GM12878 (cell line): ENCODE measurements at regions of chr17 and their contacts with region 1.

Region 1: GRCh38 chr17:164303-165235 is 16.9 kb downstream of the DOC2B start:
- DNase-seq: no peak
- ATAC-seq: peak; percentile 86
- H3K4me3 ChIP-seq: no peak overlapping the region
- H3K27ac ChIP-seq: no peak overlapping the region
- H3K4me1 ChIP-seq: peaks cover 5% of the 10 kb centered on the region; the same call in 1 of the 2 replicates
- H3K27me3 ChIP-seq: no peaks in the 10 kb centered on the region
- CTCF ChIP-seq: peak; percentile 48 to 63 (median 56)
- EP300 ChIP-seq: no peak
- POLR2A ChIP-seq: no peak
- RAD21 ChIP-seq: peak; percentile 59

Region 2: GRCh38 chr17:222172-222571 is 57.6 kb after region 1 on chr17:
- CTCF ChIA-PET with region 1: no interaction called
- POLR2A ChIA-PET with region 1: no interaction called
- RAD21 ChIA-PET with region 1: no interaction called
- SMC1A ChIA-PET with region 1: no interaction called
- in situ Hi-C with region 1: no loop called
- intact Hi-C with region 1: no loop called
- DNase-seq: no peak
- ATAC-seq: no peak
- H3K4me3 ChIP-seq: no peak overlapping the region
- H3K27ac ChIP-seq: no peak overlapping the region
- H3K4me1 ChIP-seq: no peaks in the 10 kb centered on the region
- H3K27me3 ChIP-seq: no peaks in the 10 kb centered on the region; a peak in 1 of 4 replicates
- CTCF ChIP-seq: no peak
- EP300 ChIP-seq: no peak
- POLR2A ChIP-seq: no peak
- RAD21 ChIP-seq: no peak

Region 3: GRCh38 chr17:233473-233941 is 68.9 kb after region 1 on chr17:
- CTCF ChIA-PET with region 1: no interaction called
- POLR2A ChIA-PET with region 1: no interaction called
- RAD21 ChIA-PET with region 1: no interaction called
- SMC1A ChIA-PET with region 1: no interaction called
- in situ Hi-C with region 1: no loop called
- intact Hi-C with region 1: no loop called
- DNase-seq: no peak
- ATAC-seq: peak; percentile 74
- H3K4me3 ChIP-seq: no peak overlapping the region
- H3K27ac ChIP-seq: no peak overlapping the region
- H3K4me1 ChIP-seq: peaks cover 12% of the 10 kb centered on the region
- H3K27me3 ChIP-seq: no peaks in the 10 kb centered on the region; a peak in 1 of 4 replicates
- CTCF ChIP-seq: 0 out of 6 replicates have a peak, but pooled peaks of 1 of the 3 experiments have one; percentile 14
- EP300 ChIP-seq: no peak
- POLR2A ChIP-seq: no peak
- RAD21 ChIP-seq: no peak

Region 4: GRCh38 chr17:309361-309888 is 144.9 kb after region 1 on chr17:
- CTCF ChIA-PET with region 1: interaction called, 9 read pairs
- POLR2A ChIA-PET with region 1: no interaction called
- RAD21 ChIA-PET with region 1: no interaction called
- SMC1A ChIA-PET with region 1: interaction called, 3 read pairs
- in situ Hi-C with region 1: loop called (anchors 5 kb)
- intact Hi-C with region 1: loop called (anchors 5 kb)
- DNase-seq: no peak
- ATAC-seq: peak; percentile 93
- H3K4me3 ChIP-seq: no peak overlapping the region
- H3K27ac ChIP-seq: no peak overlapping the region
- H3K4me1 ChIP-seq: no peaks in the 10 kb centered on the region
- H3K27me3 ChIP-seq: no peaks in the 10 kb centered on the region
- CTCF ChIP-seq: peak; percentile 35 to 73 (median 61)
- EP300 ChIP-seq: no peak
- POLR2A ChIP-seq: no peak
- RAD21 ChIP-seq: no peak

Region 5: GRCh38 chr17:333626-334396 is 169.2 kb after region 1 on chr17:
- CTCF ChIA-PET with region 1: no interaction called
- POLR2A ChIA-PET with region 1: no interaction called
- RAD21 ChIA-PET with region 1: no interaction called
- SMC1A ChIA-PET with region 1: no interaction called
- in situ Hi-C with region 1: no loop called
- intact Hi-C with region 1: no loop called
- DNase-seq: no peak
- ATAC-seq: no peak
- H3K4me3 ChIP-seq: no peak overlapping the region
- H3K27ac ChIP-seq: no peak overlapping the region
- H3K4me1 ChIP-seq: no peaks in the 10 kb centered on the region; the same call in 1 of the 2 replicates
- H3K27me3 ChIP-seq: no peaks in the 10 kb centered on the region
- CTCF ChIP-seq: no peak
- EP300 ChIP-seq: no peak
- POLR2A ChIP-seq: no peak
- RAD21 ChIP-seq: no peak

Region 6: DNA sequence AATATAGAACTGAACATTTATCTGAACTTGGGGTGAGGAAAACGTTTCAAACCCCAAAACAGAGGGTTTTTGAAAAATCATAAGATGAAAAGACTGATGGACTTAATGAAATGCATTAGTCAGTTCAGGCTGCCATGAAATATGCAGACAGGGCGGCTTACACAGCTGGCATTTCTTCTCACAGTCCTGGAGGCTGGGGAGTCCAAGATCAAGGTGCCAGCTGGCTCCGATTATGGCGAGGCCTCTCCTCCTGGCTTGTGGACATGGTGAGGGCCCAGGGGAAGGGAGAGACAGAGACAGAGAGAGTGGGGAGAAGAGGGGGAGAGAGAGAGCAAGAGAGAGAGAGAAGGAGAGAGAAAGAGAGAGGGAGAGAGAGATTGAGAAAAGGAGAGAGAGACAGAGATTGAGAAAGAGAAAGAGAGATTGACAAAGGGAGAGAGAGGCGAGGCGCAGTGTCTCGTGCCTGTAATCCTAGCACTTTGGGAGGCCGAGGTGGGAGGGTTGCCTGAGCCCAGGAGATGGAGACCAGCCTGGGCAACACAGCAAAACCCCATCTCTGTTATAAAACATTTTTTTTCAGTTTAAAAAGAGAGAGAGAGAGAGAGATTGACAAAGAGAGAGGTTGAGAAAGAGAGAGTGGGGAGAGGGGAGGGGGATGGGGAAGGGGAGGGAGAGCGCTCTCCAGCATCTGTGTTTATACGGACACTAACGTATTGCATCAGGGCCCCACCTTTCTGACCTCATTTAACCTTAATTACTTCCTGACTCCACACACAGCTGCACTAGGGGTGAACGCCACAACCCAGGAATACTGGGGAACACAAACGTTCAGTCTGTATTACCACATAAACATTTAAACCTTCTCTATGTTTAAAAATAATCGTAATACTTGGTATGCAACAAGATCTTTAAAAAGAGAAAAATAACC is 212.6 kb after region 1 on chr17:
- CTCF ChIA-PET with region 1: no interaction called
- POLR2A ChIA-PET with region 1: no interaction called
- RAD21 ChIA-PET with region 1: no interaction called
- SMC1A ChIA-PET with region 1: no interaction called
- in situ Hi-C with region 1: no loop called
- intact Hi-C with region 1: no loop called
- DNase-seq: no peak
- ATAC-seq: no peak
- H3K4me3 ChIP-seq: no peak overlapping the region
- H3K27ac ChIP-seq: no peak overlapping the region
- H3K4me1 ChIP-seq: no peaks in the 10 kb centered on the region
- H3K27me3 ChIP-seq: no peaks in the 10 kb centered on the region; a peak in 1 of 4 replicates
- CTCF ChIP-seq: no peak
- EP300 ChIP-seq: no peak
- POLR2A ChIP-seq: no peak
- RAD21 ChIP-seq: no peak